ENCODE measurements at regions of chr7 and their contacts with region 1.

Region 1: DNA sequence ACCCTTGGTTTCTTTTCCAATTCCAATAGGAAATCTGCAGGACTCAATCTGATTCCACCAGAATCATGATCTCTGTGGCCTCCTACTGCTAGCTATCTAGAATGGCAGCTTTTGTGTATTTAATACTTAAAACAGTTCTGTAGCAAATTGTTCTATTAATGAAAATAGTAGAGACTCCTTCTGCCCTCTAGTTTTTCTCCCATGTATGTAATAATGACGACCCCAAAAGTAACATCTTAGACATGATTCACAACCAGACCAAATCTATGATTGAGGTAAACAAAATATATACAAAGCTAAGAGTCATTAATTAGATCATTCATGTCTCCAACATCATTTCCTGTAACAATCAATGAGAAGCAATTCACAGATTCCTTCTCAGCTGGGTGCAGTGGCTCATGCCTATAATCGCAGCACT is 259.1 kb upstream of the MKLN1 start:
- DNase-seq: no peak
- ATAC-seq: peak in 2 of 4 donors; percentile 31 to 39
- H3K4me3 ChIP-seq: no peak overlapping the region
- H3K27ac ChIP-seq: peak overlapping the region in 2 of 4 donors; percentile 9 to 52
- H3K4me1 ChIP-seq: peaks cover 7 to 29% (median 22%) of the 10 kb centered on the region in 3 donors
- H3K27me3 ChIP-seq: no peaks in the 10 kb centered on the region
- CTCF ChIP-seq: no peak

Region 2: GRCh38 chr7:131122394-131122793 is 53.8 kb after region 1 on chr7:
- intact Hi-C with region 1: no loop called
- DNase-seq: no peak
- ATAC-seq: no peak
- H3K4me3 ChIP-seq: no peak overlapping the region
- H3K27ac ChIP-seq: no peak overlapping the region
- H3K4me1 ChIP-seq: no peaks in the 10 kb centered on the region
- H3K27me3 ChIP-seq: no peaks in the 10 kb centered on the region
- CTCF ChIP-seq: no peak

Region 3: DNA sequence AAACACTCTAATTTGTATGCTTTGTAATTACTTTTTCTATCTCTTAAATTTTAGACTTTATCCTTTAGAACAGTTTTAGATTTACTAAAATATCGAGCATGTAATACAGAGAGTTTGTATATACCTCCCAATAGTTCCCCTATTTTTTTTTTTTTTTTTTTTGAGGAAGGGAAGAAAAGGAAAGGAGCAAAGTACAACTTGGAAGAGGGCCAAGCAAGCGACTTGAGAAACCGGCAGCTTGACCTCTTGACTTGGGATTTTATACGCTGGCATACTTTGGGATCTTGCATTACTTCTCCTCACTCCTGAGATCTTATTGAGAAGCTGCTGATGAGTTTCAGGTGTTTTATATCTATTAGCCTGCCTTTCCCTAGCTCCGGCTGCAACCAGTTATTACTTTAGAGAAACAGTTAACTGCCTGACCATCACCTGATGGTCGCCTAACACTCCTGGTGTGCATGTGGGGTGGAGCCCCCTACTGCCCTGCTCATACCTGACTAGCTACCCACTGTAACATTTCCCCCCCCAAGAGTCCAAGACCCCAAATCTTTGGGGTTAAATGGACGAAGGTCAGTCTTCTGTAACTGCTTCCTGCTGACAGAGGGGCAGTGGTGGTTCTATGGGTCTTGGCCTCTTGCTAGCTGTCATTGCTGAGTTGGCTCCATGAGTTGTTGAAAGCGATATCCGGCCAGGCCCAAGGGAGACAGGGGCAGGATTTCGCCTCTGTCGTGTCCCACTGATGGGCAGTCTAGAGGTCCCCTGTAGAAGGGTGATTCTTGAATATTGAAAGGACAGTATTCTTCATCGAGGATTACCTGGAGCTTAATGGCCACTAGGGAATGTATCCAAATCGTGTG is 287.5 kb after region 1 on chr7:
- intact Hi-C with region 1: no loop called
- DNase-seq: no peak
- ATAC-seq: peak in 3 of 4 donors; percentile 7 to 30 (median 22)
- H3K4me3 ChIP-seq: no peak overlapping the region
- H3K27ac ChIP-seq: no peak overlapping the region
- H3K4me1 ChIP-seq: peaks cover 8 to 34% (median 28%) of the 10 kb centered on the region in 3 donors
- H3K27me3 ChIP-seq: no peaks in the 10 kb centered on the region
- CTCF ChIP-seq: no peak

Region 4: DNA sequence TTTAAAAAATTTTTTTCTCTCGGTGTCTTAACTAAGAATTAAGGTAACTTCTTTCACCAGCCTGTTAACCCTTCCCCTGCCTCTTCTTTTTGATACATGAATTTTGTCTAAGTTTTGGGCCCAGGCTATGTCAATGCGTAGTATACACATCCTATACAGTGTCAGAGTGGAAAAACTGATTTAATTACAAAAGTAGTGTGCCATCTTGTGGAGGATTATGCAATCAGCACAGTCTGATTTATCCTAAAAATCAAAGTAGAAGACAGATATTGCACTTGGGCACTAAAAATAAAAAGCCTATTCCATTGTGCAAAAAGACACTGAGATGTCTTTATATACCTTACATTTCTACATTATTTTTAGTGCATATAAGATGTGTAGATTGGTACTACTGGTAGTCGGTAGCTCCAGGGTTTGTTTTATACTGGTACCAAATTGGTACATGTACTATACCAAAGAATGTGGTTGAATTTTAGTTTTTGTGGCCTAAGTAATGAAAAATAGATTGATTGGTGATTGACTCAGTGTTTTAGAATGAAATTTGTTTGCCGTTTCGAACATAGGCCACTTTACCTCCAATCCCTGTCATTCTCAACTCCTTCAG is 355.7 kb after region 1 on chr7:
- intact Hi-C with region 1: loop called in 1 of 3 experiments (anchors 10 kb)
- DNase-seq: no peak
- ATAC-seq: peak; percentile 46 to 89 (median 80)
- H3K4me3 ChIP-seq: no peak overlapping the region
- H3K27ac ChIP-seq: no peak overlapping the region
- H3K4me1 ChIP-seq: peaks cover 0 to 10% (median 0%) of the 10 kb centered on the region in 3 donors
- H3K27me3 ChIP-seq: no peaks in the 10 kb centered on the region
- CTCF ChIP-seq: peak; percentile 9 to 48 (median 42)

Region 5: GRCh38 chr7:132080967-132081668 is 1012.5 kb after region 1 on chr7:
- intact Hi-C with region 1: no loop called
- DNase-seq: no peak
- ATAC-seq: peak in 2 of 4 donors; percentile 47 to 75
- H3K4me3 ChIP-seq: no peak overlapping the region
- H3K27ac ChIP-seq: no peak overlapping the region
- H3K4me1 ChIP-seq: no peaks in the 10 kb centered on the region
- H3K27me3 ChIP-seq: no peaks in the 10 kb centered on the region
- CTCF ChIP-seq: no peak

Measured in pancreas (tissue), 10 donors.